ENCODE measurements at regions of chr5 and their contacts with region 1.

Region 1: DNA sequence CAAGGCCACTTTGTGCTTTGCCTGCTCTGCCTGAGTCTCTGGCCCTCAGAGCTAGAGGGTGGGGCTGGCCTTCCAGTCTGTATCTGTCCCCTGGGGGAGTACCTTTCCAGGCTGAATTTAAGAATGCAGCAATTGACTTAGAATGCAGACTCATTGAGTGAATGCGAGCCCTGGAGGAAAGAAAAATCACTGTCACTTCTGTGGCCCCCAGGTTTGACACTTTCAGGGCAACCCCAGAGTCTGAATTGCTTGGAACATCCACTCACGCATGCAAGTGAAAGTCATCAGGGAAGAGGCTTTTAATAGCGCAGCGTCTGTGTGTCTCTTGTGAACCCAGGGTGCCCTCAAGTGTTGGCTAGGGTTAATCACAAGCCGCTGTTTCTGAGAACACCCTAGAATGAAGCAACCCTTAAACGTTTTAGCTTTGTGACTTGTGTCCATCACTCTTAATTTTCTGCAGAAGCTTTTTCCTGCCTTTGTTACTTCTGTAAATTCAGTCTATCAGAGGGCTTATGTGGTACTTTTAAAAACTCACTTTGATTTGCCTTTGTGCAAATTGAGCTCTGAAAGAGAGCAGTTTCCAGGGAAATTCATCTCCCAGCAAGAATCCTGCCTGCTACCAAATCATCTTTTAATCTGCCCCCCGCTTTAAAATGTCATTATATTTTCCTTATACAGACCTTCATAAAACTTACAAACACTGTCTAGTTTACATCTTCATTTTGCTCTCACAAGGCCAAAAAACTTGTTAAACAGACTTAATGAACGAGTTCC is 146.8 kb upstream of the IQGAP2 start:
- DNase-seq: peak; percentile 55
- H3K4me3 Mint-ChIP-seq: no peak overlapping the region
- H3K27ac Mint-ChIP-seq: no peak overlapping the region
- H3K4me1 Mint-ChIP-seq: no peaks in the 10 kb centered on the region
- H3K27me3 Mint-ChIP-seq: peaks cover 22% of the 10 kb centered on the region

Region 2: GRCh38 chr5:75734913-75735789 is 521.2 kb before region 1 on chr5:
- intact Hi-C with region 1: loop called (anchors 1 kb)
- DNase-seq: no peak
- H3K4me3 Mint-ChIP-seq: no peak overlapping the region
- H3K27ac Mint-ChIP-seq: no peak overlapping the region
- H3K4me1 Mint-ChIP-seq: no peaks in the 10 kb centered on the region
- H3K27me3 Mint-ChIP-seq: peaks cover 13% of the 10 kb centered on the region

Region 3: GRCh38 chr5:76074487-76075065 is 181.7 kb before region 1 on chr5:
- intact Hi-C with region 1: loop called (anchors 1 kb)
- DNase-seq: no peak
- H3K4me3 Mint-ChIP-seq: no peak overlapping the region
- H3K27ac Mint-ChIP-seq: no peak overlapping the region
- H3K4me1 Mint-ChIP-seq: no peaks in the 10 kb centered on the region
- H3K27me3 Mint-ChIP-seq: peaks cover 47% of the 10 kb centered on the region

Region 4: GRCh38 chr5:76163111-76163623 is 93.1 kb before region 1 on chr5:
- intact Hi-C with region 1: no loop called
- DNase-seq: no peak
- H3K4me3 Mint-ChIP-seq: no peak overlapping the region
- H3K27ac Mint-ChIP-seq: no peak overlapping the region
- H3K4me1 Mint-ChIP-seq: peaks cover 5% of the 10 kb centered on the region
- H3K27me3 Mint-ChIP-seq: peaks cover 26% of the 10 kb centered on the region

Region 5: GRCh38 chr5:76175051-76175666 is 81.1 kb before region 1 on chr5:
- intact Hi-C with region 1: loop called (anchors 5 kb)
- DNase-seq: peak; percentile 27
- H3K4me3 Mint-ChIP-seq: no peak overlapping the region
- H3K27ac Mint-ChIP-seq: no peak overlapping the region
- H3K4me1 Mint-ChIP-seq: peaks cover 22% of the 10 kb centered on the region
- H3K27me3 Mint-ChIP-seq: peaks cover 6% of the 10 kb centered on the region

Region 6: DNA sequence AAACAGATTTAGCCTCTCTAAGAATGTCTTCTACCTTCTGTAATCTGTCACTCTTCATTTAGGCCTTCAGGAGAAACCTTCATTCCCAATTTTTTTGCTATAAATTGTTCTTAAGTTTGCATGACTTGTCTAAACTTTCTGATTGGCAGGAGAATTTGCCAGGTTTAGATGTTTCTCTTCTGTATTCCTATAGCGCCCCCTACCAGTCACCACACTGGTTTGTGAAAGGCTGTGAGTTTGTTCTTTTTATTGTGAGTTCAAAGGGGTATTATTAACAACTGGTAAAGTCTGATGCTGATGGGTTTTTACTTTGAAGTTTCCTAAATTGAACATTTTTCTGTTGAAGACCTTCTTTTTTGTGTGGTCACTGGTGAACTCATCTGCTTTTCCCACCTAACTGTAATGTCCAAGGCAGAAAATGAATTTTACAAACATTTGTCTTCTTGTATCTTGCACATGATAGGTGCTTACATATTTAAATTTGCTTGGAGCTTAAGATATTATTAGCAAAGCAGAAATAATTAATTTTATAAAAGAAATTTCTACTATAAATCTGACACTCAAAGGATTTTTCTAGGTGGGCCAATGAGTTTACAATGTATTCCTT is 385.3 kb after region 1 on chr5:
- intact Hi-C with region 1: loop called (anchors 5 kb)
- DNase-seq: peak; percentile 41
- H3K4me3 Mint-ChIP-seq: no peak overlapping the region
- H3K27ac Mint-ChIP-seq: no peak overlapping the region
- H3K4me1 Mint-ChIP-seq: peaks cover 22% of the 10 kb centered on the region
- H3K27me3 Mint-ChIP-seq: no peaks in the 10 kb centered on the region

Measured in activated T-helper 1 cell treated with anti-CD3 and anti-CD28 coated beads, Interleukin-12 subunit alpha, Interleukin-12 subunit beta, Interleukin-2, Interleukin-4 antibody, amounts not matched to agents 30 ng/mL and 10 ng/mL and 1 ng/mL, durations not matched to agents 14 hours and 24 hours and 36 hours (primary cell).